AG04449 (cell line): ENCODE measurements at regions of chr10 and their contacts with region 1.

Region 1: GRCh38 chr10:62560199-62560819 is 186.1 kb downstream of the ZNF365 start:
- DNase-seq: peak; percentile 53
- H3K4me3 ChIP-seq: no peak overlapping the region
- CTCF ChIP-seq: no peak

Region 2: DNA sequence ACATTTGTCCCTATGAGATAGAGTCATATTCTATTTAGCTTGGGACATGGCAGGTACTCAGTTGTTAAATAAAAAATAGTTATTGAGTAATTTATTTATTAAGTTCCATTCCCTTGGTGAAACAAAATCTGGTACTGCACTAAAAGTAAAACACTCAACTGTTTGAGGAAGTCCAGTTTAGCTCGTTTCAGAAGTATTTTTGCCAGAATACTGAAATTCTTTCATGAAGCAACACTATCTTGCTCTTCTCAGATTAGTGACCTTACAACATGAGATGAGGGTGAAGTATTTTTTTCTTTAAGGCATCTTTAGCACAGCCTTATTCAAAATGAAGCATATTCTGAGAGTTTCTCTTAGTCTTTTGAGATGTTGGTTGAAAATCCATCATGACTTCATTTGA is 80.1 kb before region 1 on chr10:
- CTCF ChIA-PET with region 1: no interaction called
- POLR2A ChIA-PET with region 1: no interaction called
- DNase-seq: no peak
- H3K4me3 ChIP-seq: no peak overlapping the region
- CTCF ChIP-seq: no peak

Region 3: GRCh38 chr10:62511656-62512055 is 48.7 kb before region 1 on chr10:
- CTCF ChIA-PET with region 1: no interaction called
- POLR2A ChIA-PET with region 1: no interaction called
- DNase-seq: no peak
- H3K4me3 ChIP-seq: no peak overlapping the region
- CTCF ChIP-seq: no peak

Region 4: DNA sequence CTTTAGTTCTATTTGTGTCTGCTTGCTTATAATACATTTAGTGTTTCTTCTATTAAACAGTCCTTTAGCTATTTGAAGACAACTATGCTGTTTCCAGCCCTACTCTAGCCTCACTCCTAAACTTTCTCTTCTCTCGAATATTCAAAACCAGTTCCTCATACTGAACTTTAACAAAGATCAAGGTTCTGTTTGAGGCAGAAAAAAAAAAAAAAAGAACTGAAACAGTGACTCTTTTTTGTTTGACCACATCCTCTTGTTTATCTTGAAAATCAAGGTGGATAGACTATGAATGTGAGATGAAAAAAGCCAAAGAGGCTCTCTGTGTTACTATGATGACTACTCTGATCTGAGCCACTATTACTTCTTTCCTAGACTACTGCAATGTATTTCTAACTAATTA is 31.9 kb before region 1 on chr10:
- CTCF ChIA-PET with region 1: no interaction called
- POLR2A ChIA-PET with region 1: no interaction called
- DNase-seq: no peak
- H3K4me3 ChIP-seq: no peak overlapping the region
- CTCF ChIP-seq: no peak

Region 5: GRCh38 chr10:62577666-62578291 is 17.5 kb after region 1 on chr10:
- CTCF ChIA-PET with region 1: interaction called, 19 read pairs
- POLR2A ChIA-PET with region 1: interaction called, 17 read pairs
- DNase-seq: peak; percentile 81
- H3K4me3 ChIP-seq: no peak overlapping the region
- CTCF ChIP-seq: no peak

Region 6: DNA sequence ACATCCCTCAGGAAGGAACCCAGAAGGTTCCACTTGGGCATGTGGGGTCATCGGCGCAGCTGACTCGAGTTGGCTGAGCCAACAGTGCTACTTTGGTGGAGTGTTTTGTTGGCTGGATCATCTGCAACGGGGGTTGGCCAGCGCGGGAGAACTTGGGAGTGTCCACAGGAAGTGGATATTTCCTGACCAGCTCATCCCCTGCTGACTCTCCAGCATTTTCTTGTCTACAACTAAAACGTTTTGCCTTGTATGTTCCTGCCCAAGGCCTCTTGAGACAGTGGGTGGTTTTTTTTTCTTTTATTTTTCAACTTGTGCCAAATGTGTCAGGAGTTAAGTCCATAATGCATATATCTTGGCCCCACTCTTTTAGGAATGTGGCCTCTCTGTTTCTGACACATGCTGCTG is 22.5 kb after region 1 on chr10:
- CTCF ChIA-PET with region 1: interaction called, 19 read pairs
- POLR2A ChIA-PET with region 1: interaction called, 17 read pairs
- DNase-seq: peak; percentile 99
- H3K4me3 ChIP-seq: no peak overlapping the region
- CTCF ChIP-seq: no peak